Stomach (tissue), 19 donors: ENCODE measurements at regions of chr7 and their contacts with region 1.

Region 1: DNA sequence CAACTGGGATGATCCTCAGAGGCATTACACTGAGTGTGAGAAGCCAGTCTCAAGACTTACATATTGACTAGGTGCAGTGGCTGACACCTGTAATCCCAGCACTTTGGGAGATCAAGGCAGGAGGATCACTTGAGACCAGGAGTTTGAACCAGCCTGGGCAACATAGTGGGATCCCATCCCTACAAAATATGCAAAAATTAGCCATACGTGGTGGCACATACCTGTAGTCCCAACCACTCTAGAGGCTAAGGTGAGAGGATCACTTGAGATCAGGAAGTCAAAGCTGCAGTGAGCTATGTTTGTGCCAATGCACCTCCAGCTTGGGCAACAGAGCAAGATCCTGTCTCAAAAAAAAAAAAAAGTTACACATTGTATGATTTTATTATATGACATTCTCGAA is 23.5 kb upstream of the TNPO3 start:
- DNase-seq: no peak
- H3K4me3 ChIP-seq: no peak overlapping the region
- H3K27ac ChIP-seq: no peak overlapping the region
- H3K4me1 ChIP-seq: no peaks in the 10 kb centered on the region
- H3K27me3 ChIP-seq: peaks cover 0 to 6% (median 0%) of the 10 kb centered on the region in 3 donors
- CTCF ChIP-seq: no peak
- EP300 ChIP-seq: no peak
- POLR2A ChIP-seq: no peak

Region 2: DNA sequence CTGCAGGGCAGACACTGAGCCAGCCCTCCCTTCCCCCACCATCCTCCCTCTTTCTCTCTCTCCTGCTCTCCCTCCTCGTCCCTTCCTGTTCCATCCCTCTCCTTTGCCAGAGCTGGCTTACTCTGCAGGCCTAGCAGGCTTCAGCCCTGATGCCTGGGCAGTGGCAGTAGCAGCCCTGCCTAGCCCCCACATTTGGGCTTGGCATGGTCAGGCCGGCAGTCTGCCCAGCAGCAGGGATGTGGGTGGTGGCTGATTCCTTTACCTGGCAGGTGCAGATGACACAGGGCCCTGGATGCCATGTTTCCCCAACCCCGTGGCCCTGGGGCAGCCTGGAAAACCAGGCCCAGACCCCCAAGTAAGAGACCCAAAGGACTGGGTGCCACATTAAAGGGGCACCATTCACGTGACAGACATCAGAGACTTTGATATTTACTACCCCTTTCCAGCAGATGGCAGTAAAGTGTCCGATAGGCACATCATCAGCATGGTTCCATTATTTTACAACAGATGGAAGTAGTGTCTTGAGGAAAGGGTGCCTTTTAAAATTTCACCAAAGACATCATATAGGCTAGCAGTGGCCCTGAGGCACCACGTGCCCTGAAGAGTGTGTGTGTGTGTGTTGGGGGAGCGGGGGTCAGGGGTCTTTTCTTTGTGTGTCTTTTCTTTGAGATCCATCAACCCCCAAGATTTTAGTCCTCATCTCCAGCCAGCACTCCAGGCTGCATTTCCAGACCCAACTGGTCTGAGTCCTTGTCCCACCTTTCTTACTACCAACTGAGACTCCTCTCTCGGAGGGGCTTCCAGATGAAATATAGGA is 173.9 kb before region 1 on chr7:
- intact Hi-C with region 1: loop called (anchors 5 kb)
- DNase-seq: peak in 1 of 2 donors; percentile 75
- H3K4me3 ChIP-seq: no peak overlapping the region
- H3K27ac ChIP-seq: no peak overlapping the region
- H3K4me1 ChIP-seq: peaks cover 2 to 20% (median 5%) of the 10 kb centered on the region in 4 donors
- H3K27me3 ChIP-seq: peaks cover 0 to 45% (median 10%) of the 10 kb centered on the region in 3 donors
- CTCF ChIP-seq: peak in 5 of 7 experiments; percentile 44 to 64 (median 50)
- EP300 ChIP-seq: no peak
- POLR2A ChIP-seq: no peak

Region 3: DNA sequence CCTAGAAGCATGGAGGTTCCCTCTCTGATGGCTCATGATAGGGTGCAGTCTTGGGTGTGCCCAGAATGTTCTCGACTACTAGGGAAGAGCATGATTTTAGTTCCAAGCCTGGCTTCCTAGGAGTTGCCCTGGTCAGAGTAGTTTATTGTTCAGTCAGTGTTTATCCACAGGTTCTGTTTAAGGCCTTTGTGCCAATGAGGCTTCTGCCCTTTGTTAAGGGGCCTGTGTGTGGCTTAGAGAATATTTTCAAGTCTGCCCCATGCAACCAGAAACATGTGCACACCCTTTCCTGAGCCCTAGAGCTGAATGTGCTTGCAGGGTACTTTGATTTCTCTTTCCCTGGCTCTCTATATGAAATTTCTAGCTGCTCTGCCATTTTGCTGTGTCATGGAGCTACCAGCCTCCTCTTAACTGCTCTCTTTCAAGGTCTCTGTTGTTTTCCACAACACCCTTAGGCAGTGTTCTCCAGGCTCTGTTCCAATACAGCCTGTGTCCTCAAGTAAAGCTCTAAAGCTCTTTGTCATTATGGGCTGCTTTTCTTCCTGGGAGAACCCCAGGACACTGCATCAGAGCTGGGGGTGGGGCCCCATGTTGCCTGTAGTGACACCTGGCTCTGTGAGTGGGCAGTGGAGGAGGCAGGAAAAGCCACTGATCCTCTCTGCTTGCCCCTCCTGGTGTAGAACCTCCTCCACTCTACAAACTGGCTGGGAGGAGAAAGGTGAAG is 32.0 kb after region 1 on chr7:
- intact Hi-C with region 1: no loop called
- DNase-seq: peak in 1 of 2 donors; percentile 17
- H3K4me3 ChIP-seq: no peak overlapping the region
- H3K27ac ChIP-seq: peak overlapping the region in 1 of 5 donors; percentile 1
- H3K4me1 ChIP-seq: no peaks in the 10 kb centered on the region
- H3K27me3 ChIP-seq: no peaks in the 10 kb centered on the region
- CTCF ChIP-seq: no peak
- EP300 ChIP-seq: no peak
- POLR2A ChIP-seq: no peak

Region 4: DNA sequence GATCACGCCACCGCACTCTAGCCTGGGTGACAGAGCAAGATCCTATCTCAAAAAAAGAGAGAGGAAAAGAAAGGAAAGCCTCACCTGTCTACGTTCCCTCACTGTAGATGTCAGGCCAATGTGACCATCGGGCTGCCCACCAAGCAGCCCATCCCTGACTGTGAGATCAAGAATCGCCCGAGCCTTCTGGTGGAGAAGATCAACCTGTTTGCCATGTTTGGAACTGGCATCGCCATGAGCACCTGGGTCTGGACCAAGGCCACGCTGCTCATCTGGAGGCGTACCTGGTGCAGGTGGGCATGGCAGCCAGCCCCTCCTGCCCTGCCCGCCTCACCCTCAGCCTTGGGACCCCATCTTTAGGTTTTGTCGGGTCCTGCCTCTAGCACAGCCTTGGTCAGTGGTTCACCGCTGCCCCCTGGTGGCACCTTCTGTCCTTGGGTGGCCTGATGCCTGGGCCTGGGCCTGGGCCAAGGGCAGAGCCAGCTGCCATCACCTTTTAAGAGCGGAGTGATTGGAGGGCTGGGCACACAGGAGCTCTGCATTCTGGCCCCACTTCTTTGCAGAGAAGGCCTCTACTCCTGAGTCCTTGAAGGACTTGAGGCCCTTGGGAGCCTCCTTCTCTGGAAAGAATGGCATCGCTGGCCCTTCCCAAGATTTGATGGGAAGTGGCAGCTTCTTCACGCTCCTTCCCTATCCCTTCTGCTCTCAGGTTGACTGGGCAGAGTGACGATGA is 132.0 kb after region 1 on chr7:
- intact Hi-C with region 1: no loop called
- DNase-seq: peak; percentile 84 to 88
- H3K4me3 ChIP-seq: no peak overlapping the region
- H3K27ac ChIP-seq: no peak overlapping the region
- H3K4me1 ChIP-seq: peaks cover 0 to 6% (median 0%) of the 10 kb centered on the region in 4 donors
- H3K27me3 ChIP-seq: no peaks in the 10 kb centered on the region
- CTCF ChIP-seq: peak in 5 of 7 experiments; percentile 69 to 85 (median 84)
- EP300 ChIP-seq: no peak
- POLR2A ChIP-seq: no peak

Region 5: DNA sequence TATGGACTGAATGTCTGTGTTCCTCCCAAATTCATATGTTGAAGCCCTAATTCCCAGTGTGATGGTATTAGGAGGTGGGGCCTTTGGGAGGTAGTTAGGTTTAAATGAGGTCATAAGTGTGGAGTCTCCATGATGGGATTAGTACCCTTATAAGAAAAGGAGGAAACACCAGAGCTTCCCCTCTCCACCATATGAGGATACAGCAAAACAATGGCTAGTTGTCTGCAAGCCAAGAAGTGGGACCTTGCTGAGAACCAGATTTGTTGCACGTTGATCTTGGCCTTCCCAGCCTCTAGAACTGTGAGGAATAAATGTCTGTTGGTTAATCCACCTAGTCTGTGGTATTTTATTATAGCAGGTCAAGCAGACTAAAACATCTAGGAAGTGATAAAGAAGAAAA is 248.6 kb after region 1 on chr7:
- intact Hi-C with region 1: no loop called
- DNase-seq: no peak
- H3K4me3 ChIP-seq: no peak overlapping the region
- H3K27ac ChIP-seq: no peak overlapping the region
- H3K4me1 ChIP-seq: peaks cover 0 to 2% (median under 1%) of the 10 kb centered on the region in 4 donors
- H3K27me3 ChIP-seq: no peaks in the 10 kb centered on the region
- CTCF ChIP-seq: no peak
- EP300 ChIP-seq: no peak
- POLR2A ChIP-seq: no peak